HCT116 (cell line): ENCODE measurements at regions of chr9 and their contacts with region 1.

Region 1: GRCh38 chr9:19895006-19895405 is 106.2 kb upstream of the SLC24A2 start:
- DNase-seq: no peak
- ATAC-seq: no peak
- H3K4me3 ChIP-seq: no peak overlapping the region
- H3K27ac ChIP-seq: no peak overlapping the region
- H3K4me1 ChIP-seq: no peaks in the 10 kb centered on the region
- H3K27me3 ChIP-seq: peaks cover 12% of the 10 kb centered on the region; the same call in 1 of the 2 replicates
- CTCF ChIP-seq: no peak
- POLR2A ChIP-seq: no peak
- RAD21 ChIP-seq: no peak

Region 2: GRCh38 chr9:19946441-19947109 is 51.6 kb after region 1 on chr9:
- CTCF ChIA-PET with region 1: no interaction called
- POLR2A ChIA-PET with region 1: no interaction called
- RAD21 ChIA-PET with region 1: no interaction called
- intact Hi-C with region 1: loop called (anchors 10 kb)
- DNase-seq: no peak
- ATAC-seq: peak; percentile 50; the same call in 1 of the 2 replicates
- H3K4me3 ChIP-seq: no peak overlapping the region
- H3K27ac ChIP-seq: no peak overlapping the region
- H3K4me1 ChIP-seq: no peaks in the 10 kb centered on the region
- H3K27me3 ChIP-seq: peaks cover 36% of the 10 kb centered on the region
- CTCF ChIP-seq: peak in 1 of 3 experiments; percentile 32; a peak in 2 of 6 replicates
- POLR2A ChIP-seq: no peak
- RAD21 ChIP-seq: peak; percentile 46; the same call in 1 of the 2 replicates